ENCODE measurements at regions of chr7 and their contacts with region 1.

Region 1: GRCh38 chr7:140170375-140170774 is 6.4 kb downstream of the KDM7A start:
- DNase-seq: no peak
- ATAC-seq: 0 out of 3 replicates have a peak, but pooled peaks have one; percentile 7
- H3K4me3 ChIP-seq: no peak overlapping the region
- H3K27ac ChIP-seq: no peak overlapping the region
- H3K4me1 ChIP-seq: peaks cover 1 to 5% of the 10 kb centered on the region in 2 experiments; a peak in 4 of 5 replicates
- H3K27me3 ChIP-seq: no peaks in the 10 kb centered on the region
- CTCF ChIP-seq: no peak
- EP300 ChIP-seq: no peak
- POLR2A ChIP-seq: no peak
- RAD21 ChIP-seq: no peak

Region 2: GRCh38 chr7:139610595-139610994 is 559.8 kb before region 1 on chr7:
- CTCF ChIA-PET with region 1: no interaction called
- POLR2A ChIA-PET with region 1: no interaction called
- in situ Hi-C with region 1: no loop called
- intact Hi-C with region 1: no loop called
- DNase-seq: no peak
- ATAC-seq: no peak
- H3K4me3 ChIP-seq: no peak overlapping the region
- H3K27ac ChIP-seq: no peak overlapping the region
- H3K4me1 ChIP-seq: no peaks in the 10 kb centered on the region
- H3K27me3 ChIP-seq: no peaks in the 10 kb centered on the region
- CTCF ChIP-seq: no peak
- EP300 ChIP-seq: no peak
- POLR2A ChIP-seq: no peak
- RAD21 ChIP-seq: no peak

Region 3: GRCh38 chr7:139620676-139621344 is 549.6 kb before region 1 on chr7:
- CTCF ChIA-PET with region 1: no interaction called
- POLR2A ChIA-PET with region 1: no interaction called
- in situ Hi-C with region 1: no loop called
- intact Hi-C with region 1: no loop called
- DNase-seq: peak; percentile 75 to 91 (median 83)
- ATAC-seq: peak; percentile 94
- H3K4me3 ChIP-seq: no peak overlapping the region
- H3K27ac ChIP-seq: no peak overlapping the region
- H3K4me1 ChIP-seq: peaks cover 0 to 6% of the 10 kb centered on the region in 2 experiments; a peak in 2 of 5 replicates
- H3K27me3 ChIP-seq: no peaks in the 10 kb centered on the region
- CTCF ChIP-seq: peak; percentile 91 to 97 (median 95)
- EP300 ChIP-seq: 0 out of 2 replicates have a peak, but pooled peaks have one; percentile 7
- POLR2A ChIP-seq: no peak
- RAD21 ChIP-seq: peak; percentile 80 to 84

Region 4: DNA sequence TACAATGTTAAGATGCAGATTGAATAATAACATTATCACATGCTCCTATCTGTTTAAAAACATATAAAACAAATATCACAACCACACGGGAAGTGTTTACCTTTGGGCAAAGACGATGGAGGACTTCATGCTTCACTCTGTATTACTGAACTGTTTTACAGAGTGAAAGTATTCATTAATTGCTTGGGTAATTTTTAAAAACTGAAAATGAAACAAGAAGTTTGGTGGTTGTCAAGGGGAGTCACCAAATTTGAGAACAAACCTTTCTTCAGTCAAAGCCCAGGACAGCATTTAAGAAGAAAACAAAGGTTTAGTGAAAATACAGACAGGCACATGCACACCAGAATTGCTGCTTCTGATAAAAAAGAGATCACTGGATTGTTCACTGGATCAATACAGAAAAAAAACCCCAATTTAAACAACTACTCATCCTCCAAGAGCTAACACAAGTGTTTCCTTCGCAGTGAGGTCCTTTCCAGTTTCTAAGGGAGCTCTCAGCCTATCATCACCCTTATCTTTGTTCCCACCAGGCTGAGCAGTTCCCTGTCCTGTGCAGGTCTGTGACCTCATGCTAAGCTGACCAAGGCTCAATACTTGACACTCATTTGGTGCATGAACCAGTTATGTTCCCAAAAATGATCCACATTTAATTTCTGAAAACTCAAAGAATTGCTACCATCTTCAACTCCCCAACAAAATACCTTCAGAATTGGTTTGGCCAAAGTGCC is 116.4 kb before region 1 on chr7:
- CTCF ChIA-PET with region 1: no interaction called
- POLR2A ChIA-PET with region 1: no interaction called
- in situ Hi-C with region 1: no loop called
- intact Hi-C with region 1: loop called (anchors 1 kb)
- DNase-seq: peak; percentile 60 to 78 (median 70)
- ATAC-seq: peak; percentile 86
- H3K4me3 ChIP-seq: no peak overlapping the region
- H3K27ac ChIP-seq: no peak overlapping the region
- H3K4me1 ChIP-seq: peaks cover 4 to 12% of the 10 kb centered on the region in 2 experiments; a peak in 3 of 5 replicates
- H3K27me3 ChIP-seq: no peaks in the 10 kb centered on the region
- CTCF ChIP-seq: no peak
- EP300 ChIP-seq: no peak
- POLR2A ChIP-seq: no peak
- RAD21 ChIP-seq: no peak

Region 5: DNA sequence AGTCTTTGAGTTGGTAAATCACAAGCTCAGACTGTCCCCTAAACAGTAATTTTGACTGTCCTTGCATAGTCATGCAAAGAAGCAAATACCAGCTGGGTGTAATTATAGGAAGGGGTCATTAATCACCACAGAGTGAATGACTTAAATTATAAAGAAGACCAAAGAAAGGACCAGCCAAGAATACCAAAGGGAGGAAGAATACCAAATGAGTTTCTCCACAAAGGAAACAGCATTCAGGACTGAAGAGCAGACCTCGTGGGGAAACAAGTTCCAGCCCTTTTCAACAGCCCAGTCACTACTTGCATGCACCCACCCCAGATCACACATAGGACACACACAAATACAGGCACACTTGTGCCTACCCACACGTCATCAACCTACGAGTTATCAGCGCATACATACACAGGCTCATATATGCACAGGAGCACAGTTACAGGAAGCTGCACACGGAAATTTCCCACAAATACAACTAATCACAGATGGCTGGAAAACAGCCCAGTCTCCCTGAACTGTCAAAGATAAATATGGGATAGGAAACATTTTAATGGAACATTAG is 392.6 kb after region 1 on chr7:
- CTCF ChIA-PET with region 1: no interaction called
- POLR2A ChIA-PET with region 1: no interaction called
- in situ Hi-C with region 1: no loop called
- intact Hi-C with region 1: no loop called
- DNase-seq: no peak
- ATAC-seq: no peak
- H3K4me3 ChIP-seq: no peak overlapping the region
- H3K27ac ChIP-seq: no peak overlapping the region
- H3K4me1 ChIP-seq: no peaks in the 10 kb centered on the region
- H3K27me3 ChIP-seq: peaks cover 53 to 87% of the 10 kb centered on the region in 2 experiments
- CTCF ChIP-seq: no peak
- EP300 ChIP-seq: no peak
- POLR2A ChIP-seq: no peak
- RAD21 ChIP-seq: no peak